Dorsolateral prefrontal cortex (tissue), 120 donors: ENCODE measurements at regions of chr15 and their contacts with region 1.

Region 1: GRCh38 chr15:45457641-45458433 is 64.7 kb downstream of the SLC30A4 start:
- DNase-seq: peak in 7 of 10 donors; percentile 49 to 81 (median 61)
- H3K4me3 ChIP-seq: peak overlapping the region; percentile 34 to 77 (median 61)
- H3K27ac ChIP-seq: peak overlapping the region; percentile 1 to 97 (median 85)
- H3K27me3 ChIP-seq: no peaks in the 10 kb centered on the region
- CTCF ChIP-seq: peak; percentile 61 to 98 (median 84)

Region 2: DNA sequence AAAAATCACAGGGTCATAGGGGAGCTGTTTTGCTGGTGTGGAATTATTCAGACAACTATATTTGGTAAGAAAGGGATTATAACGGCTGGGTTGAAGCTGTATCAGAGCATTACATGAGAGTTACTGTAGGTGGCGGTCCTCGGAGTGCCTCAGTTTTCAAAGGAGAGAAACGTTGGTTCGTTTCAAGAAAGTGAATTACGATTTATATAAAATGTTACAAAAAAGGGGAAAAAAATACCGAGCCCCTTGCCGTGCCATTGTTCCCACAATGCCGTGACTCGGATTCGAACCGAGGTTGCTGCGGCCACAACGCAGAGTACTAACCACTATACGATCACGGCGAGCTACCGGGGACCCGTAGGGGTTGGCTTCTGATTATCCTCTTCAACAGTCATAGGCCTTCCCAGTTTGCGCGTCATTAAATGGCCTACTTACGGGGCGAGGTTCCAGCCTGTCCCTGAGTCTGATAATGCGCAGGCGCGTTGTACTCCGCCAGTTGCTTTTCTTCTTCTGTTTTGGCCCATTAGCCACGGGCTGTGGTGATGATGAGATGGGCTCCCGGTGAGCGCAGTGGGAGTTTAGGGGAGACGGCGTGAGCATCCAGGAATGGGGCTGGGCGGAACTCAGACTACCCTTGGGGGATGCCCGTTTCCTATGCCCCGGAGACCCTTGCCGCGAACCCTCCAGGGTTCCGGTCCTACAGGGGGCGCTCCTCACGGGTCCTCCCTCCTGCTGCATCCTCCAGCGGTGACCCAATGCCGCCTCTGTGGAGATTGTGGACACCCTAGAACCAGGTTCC is 259.3 kb before region 1 on chr15:
- intact Hi-C with region 1: loop called (anchors 5 kb)
- DNase-seq: peak; percentile 90 to 98 (median 94)
- H3K4me3 ChIP-seq: peak overlapping the region; percentile 47 to 94 (median 76)
- H3K27ac ChIP-seq: peak overlapping the region; percentile 85 to 100 (median 99)
- H3K27me3 ChIP-seq: no peaks in the 10 kb centered on the region
- CTCF ChIP-seq: peak; percentile 57 to 91 (median 78)

Region 3: GRCh38 chr15:45402162-45402954 is 55.5 kb before region 1 on chr15:
- intact Hi-C with region 1: loop called in 1 of 2 experiments (anchors 10 kb)
- DNase-seq: peak; percentile 93 to 97 (median 96)
- H3K4me3 ChIP-seq: peak overlapping the region; percentile 60 to 99 (median 93)
- H3K27ac ChIP-seq: peak overlapping the region; percentile 68 to 98 (median 94)
- H3K27me3 ChIP-seq: no peaks in the 10 kb centered on the region
- CTCF ChIP-seq: peak in 23 of 56 donors; percentile 4 to 60 (median 34)

Region 4: GRCh38 chr15:45522328-45523160 is 64.7 kb after region 1 on chr15 and contains the start of gene SLC30A4:
- intact Hi-C with region 1: loop called (anchors 5 kb)
- DNase-seq: peak; percentile 44 to 85 (median 66)
- H3K4me3 ChIP-seq: peak within 1 kb of the TSS; percentile 50 to 96 (median 84)
- H3K27ac ChIP-seq: peak within 1 kb of the TSS; percentile 35 to 98 (median 91)
- H3K27me3 ChIP-seq: no peaks in the 10 kb centered on the region
- CTCF ChIP-seq: peak; percentile 9 to 85 (median 65)
- total RNA-seq, gene SLC30A4: 11.4 to 24.5 (median 17.2) TPM

Region 5: GRCh38 chr15:45611305-45611704 is 153.5 kb after region 1 on chr15:
- intact Hi-C with region 1: loop called (anchors 1 kb)
- DNase-seq: no peak
- H3K4me3 ChIP-seq: no peak overlapping the region
- H3K27ac ChIP-seq: peak overlapping the region in 21 of 59 donors; percentile 1 to 67 (median 37)
- H3K27me3 ChIP-seq: no peaks in the 10 kb centered on the region
- CTCF ChIP-seq: peak; percentile 34 to 74 (median 58)